Activated CD4-positive, alpha-beta memory T cell treated with anti-CD3 and anti-CD28 coated beads for 36 hours (primary cell): ENCODE measurements at regions of chr12 and their contacts with region 1.

Region 1: GRCh38 chr12:113903381-113903863 is 62.7 kb downstream of the RBM19 start:
- DNase-seq: peak; percentile 30
- H3K4me3 Mint-ChIP-seq: no peak overlapping the region
- H3K27ac Mint-ChIP-seq: peak overlapping the region; percentile 63
- H3K4me1 Mint-ChIP-seq: peaks cover 15% of the 10 kb centered on the region
- H3K27me3 Mint-ChIP-seq: no peaks in the 10 kb centered on the region

Region 2: GRCh38 chr12:113965951-113966797 is 62.8 kb after region 1 on chr12 and contains the start of gene RBM19:
- CTCF ChIA-PET with region 1: interaction called, 3 read pairs
- POLR2A ChIA-PET with region 1: no interaction called
- intact Hi-C with region 1: loop called (anchors 1 kb)
- DNase-seq: peak; percentile 98
- H3K4me3 Mint-ChIP-seq: peak within 1 kb of the TSS; percentile 100
- H3K27ac Mint-ChIP-seq: peak within 1 kb of the TSS; percentile 92
- H3K4me1 Mint-ChIP-seq: peaks cover 53% of the 10 kb centered on the region
- H3K27me3 Mint-ChIP-seq: no peaks in the 10 kb centered on the region
- total RNA-seq, gene RBM19: 69.6 to 74.1 TPM